ENCODE measurements at regions of chr19 and their contacts with region 1.

Region 1: DNA sequence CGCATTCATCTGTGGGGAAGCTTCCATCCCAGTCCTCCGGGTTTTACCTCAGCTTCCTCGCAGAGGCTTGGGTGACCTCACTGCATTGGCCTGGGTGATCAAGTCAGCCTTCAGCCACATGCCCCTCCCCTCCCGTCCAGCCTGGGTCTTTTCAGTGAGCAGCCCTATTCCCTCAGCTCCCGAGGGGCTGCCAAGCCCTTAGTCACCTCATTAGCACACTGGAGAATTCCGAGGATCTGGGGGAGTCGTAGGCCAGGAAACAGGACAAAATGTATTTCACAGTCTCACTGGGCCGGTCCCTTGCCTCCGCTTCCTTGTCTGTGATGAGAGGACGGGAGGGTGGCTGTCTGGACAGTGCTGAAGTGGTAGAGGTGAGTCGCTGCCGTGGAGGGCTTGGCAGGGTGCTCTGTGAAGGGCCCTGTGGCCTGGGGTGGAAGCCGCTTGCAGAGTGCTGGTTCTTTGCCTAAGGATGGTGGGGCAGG is 19.9 kb downstream of the KDM4B start:
- DNase-seq: no peak
- H3K4me3 ChIP-seq: peak overlapping the region in 1 of 3 donors; percentile 5
- H3K27ac ChIP-seq: peak overlapping the region; percentile 14 to 71
- H3K4me1 ChIP-seq: peaks cover 4% of the 10 kb centered on the region in 2 donors
- H3K27me3 ChIP-seq: no peaks in the 10 kb centered on the region
- CTCF ChIP-seq: no peak
- POLR2A ChIP-seq: no peak

Region 2: GRCh38 chr19:4971424-4971793 is 17.4 kb before region 1 on chr19:
- intact Hi-C with region 1: loop called (anchors 1 kb)
- DNase-seq: peak in 1 of 2 donors; percentile 52
- H3K4me3 ChIP-seq: peak overlapping the region; percentile 67 to 78 (median 75)
- H3K27ac ChIP-seq: peak overlapping the region; percentile 81 to 91
- H3K4me1 ChIP-seq: peaks cover 8 to 34% of the 10 kb centered on the region in 2 donors
- H3K27me3 ChIP-seq: no peaks in the 10 kb centered on the region
- CTCF ChIP-seq: no peak
- POLR2A ChIP-seq: no peak

Region 3: DNA sequence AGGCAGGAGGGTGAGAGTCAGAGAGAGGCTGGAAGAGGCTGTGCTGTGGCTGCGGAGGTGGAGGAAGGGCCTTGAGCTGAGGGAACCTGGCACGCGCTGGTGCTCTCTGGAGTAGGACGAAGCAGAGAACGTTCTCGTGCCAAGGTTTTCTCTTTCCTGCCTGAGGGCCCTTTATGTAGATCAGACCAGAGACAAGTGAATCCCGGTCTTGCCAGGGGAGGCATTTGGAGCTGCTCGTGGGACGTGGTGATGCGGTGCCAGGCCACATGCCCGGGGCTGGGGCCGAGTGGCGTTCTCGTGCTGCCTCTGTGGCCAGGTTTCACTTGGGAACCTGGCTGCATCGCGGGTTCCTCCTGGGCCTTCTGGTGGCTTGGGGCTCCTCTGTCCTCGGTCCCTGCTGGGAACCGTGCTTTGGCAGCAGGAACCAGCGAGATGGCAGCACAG is 34.3 kb after region 1 on chr19:
- intact Hi-C with region 1: loop called (anchors 2 kb)
- DNase-seq: peak; percentile 75
- H3K4me3 ChIP-seq: no peak overlapping the region
- H3K27ac ChIP-seq: peak overlapping the region; percentile 48 to 52
- H3K4me1 ChIP-seq: peaks cover 3 to 6% of the 10 kb centered on the region in 2 donors
- H3K27me3 ChIP-seq: no peaks in the 10 kb centered on the region
- CTCF ChIP-seq: no peak
- POLR2A ChIP-seq: no peak

Region 4: DNA sequence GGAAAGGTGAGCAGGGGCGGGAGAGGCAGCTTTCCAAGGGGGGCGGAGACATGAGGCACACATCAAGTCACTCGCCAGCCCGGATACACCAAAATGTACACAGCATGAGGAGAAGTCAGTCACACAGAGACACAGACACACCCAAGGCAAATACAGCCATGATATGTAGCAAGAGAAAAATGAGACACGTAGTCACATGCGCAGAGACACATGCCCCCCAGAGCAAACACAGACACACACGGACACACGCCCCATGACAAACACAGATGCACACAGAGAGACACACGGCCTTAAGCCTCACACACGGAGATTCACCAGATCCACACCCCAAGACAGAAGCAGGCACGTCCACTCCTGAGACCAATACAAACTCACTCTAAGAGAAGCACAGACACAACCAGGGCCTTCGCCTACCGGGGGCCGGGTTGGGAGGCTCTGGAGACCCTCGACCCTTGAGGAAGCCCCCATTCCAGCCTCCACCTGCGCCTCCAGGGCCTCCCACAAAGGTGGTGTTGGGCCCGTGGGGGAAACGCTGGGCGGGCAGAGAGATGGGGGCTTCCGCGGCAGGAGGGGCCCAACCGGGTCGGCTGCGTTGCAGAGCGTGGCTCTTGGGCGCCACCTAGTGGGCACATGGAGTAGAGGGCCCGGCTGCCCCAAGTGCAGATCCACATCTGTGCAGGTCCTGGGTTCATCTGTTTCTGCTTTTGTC is 589.1 kb after region 1 on chr19:
- intact Hi-C with region 1: no loop called
- DNase-seq: peak; percentile 36 to 78
- H3K4me3 ChIP-seq: peak overlapping the region in 2 of 3 donors; percentile 29 to 50
- H3K27ac ChIP-seq: peak overlapping the region; percentile 4 to 42
- H3K4me1 ChIP-seq: no peaks in the 10 kb centered on the region
- H3K27me3 ChIP-seq: no peaks in the 10 kb centered on the region
- CTCF ChIP-seq: peak; percentile 91 to 96 (median 93)
- POLR2A ChIP-seq: no peak